ENCODE measurements at regions of chr9 and their contacts with region 1.

Region 1: GRCh38 chr9:134135343-134136118 is at the start of gene WDR5:
- DNase-seq: peak; percentile 95
- ATAC-seq: peak; percentile 73
- H3K4me3 Mint-ChIP-seq: peak within 1 kb of the TSS; percentile 99
- H3K27ac Mint-ChIP-seq: peak within 1 kb of the TSS; percentile 89
- H3K4me1 Mint-ChIP-seq: peaks cover 29% of the 10 kb centered on the region
- H3K27me3 Mint-ChIP-seq: no peaks in the 10 kb centered on the region
- total RNA-seq, gene WDR5: 35.4 to 37.6 TPM

Region 2: DNA sequence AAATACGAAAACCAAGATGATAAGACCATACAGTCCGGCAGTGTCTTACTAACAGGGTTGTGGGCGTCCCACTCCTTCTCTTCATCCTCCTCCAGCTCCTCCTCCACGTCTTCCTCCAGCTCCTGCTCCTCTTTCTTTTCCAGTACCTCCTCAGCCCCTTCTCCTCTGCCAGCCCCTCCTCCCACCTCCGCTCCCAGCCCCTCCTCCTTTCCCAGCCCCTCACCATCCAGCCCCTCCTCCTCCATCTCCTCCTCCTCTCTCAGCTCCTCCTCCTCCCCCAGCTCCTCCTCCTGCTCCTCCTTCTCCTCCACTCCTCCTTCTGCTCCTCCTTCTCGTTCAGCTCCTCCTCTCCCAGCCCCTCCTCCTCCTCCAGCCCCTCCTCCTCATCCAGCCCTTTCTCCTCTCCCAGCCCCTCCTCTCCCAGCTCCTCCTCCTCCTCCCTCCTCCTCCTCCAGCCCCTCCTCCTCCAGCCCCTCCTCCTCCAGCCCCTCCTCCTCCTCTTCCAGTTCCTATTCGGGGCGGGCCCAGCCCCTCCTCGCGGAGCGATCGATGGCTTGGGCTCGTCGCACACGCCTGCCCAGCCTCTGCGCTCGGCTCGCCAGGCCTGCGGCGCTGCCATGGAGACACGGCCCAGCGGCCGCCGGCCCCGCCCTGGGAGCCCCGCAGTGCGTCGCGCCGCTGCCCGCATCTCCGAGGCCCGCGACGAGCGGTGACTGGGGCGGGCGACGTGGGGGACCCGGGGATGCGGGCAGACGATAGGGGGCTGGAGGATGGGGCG is 110.5 kb before region 1 on chr9 and contains the start of gene BRD3OS:
- POLR2A ChIA-PET with region 1: interaction called, 14 read pairs
- DNase-seq: peak; percentile 90
- ATAC-seq: peak; percentile 88
- H3K4me3 Mint-ChIP-seq: peak within 1 kb of the TSS; percentile 86
- H3K27ac Mint-ChIP-seq: peak within 1 kb of the TSS; percentile 48
- H3K4me1 Mint-ChIP-seq: peaks cover 3% of the 10 kb centered on the region
- H3K27me3 Mint-ChIP-seq: peaks cover 5% of the 10 kb centered on the region
- total RNA-seq, gene BRD3OS: 14.2 to 17.0 TPM

Region 3: GRCh38 chr9:134066913-134067851 is 68.3 kb before region 1 on chr9:
- POLR2A ChIA-PET with region 1: interaction called, 16 read pairs
- DNase-seq: peak; percentile 65
- ATAC-seq: peak; percentile 0
- H3K4me3 Mint-ChIP-seq: peak overlapping the region; percentile 95
- H3K27ac Mint-ChIP-seq: peak overlapping the region; percentile 97
- H3K4me1 Mint-ChIP-seq: peaks cover 19% of the 10 kb centered on the region
- H3K27me3 Mint-ChIP-seq: peaks cover 21% of the 10 kb centered on the region

Region 4: GRCh38 chr9:134099123-134099787 is 36.3 kb before region 1 on chr9:
- POLR2A ChIA-PET with region 1: no interaction called
- DNase-seq: peak; percentile 44
- ATAC-seq: peak; percentile 88
- H3K4me3 Mint-ChIP-seq: no peak overlapping the region
- H3K27ac Mint-ChIP-seq: no peak overlapping the region
- H3K4me1 Mint-ChIP-seq: peaks cover 3% of the 10 kb centered on the region
- H3K27me3 Mint-ChIP-seq: peaks cover 6% of the 10 kb centered on the region

Region 5: DNA sequence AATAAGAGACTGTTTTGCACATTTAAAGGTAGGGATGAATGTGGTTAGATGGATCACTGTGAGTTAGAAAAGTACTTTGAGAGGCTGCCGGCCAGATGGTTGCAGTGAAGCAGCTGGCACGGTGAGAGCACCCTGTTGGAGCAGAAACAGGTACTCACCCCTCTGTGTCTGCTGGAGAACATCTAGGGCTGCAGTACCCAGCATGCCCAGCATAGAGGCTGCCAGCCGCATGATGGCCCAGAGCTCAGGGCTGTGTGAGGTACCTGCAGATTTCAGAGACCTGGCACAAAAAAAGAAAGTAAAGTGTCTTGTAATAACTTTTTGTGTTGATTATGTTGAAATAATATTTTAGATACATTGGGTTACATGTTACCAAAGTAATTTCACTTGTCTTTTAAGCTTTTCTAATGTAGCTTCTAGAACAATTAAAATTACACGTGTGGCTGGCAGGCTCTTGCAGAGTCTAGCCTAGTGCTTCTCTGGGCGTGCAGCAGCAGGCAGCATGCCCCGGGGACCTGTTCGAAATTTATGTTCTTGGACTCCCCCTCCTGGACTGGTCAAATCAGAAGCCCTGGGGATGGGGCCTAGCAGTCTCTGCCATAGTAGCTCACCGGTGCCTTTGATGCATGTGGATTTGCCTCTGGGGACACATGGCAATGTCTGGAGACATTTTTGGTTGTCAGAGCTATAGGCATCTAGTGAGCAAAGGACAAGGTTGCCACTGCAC is 11.4 kb after region 1 on chr9:
- POLR2A ChIA-PET with region 1: interaction called, 11 read pairs
- DNase-seq: no peak
- ATAC-seq: no peak
- H3K4me3 Mint-ChIP-seq: no peak overlapping the region
- H3K27ac Mint-ChIP-seq: no peak overlapping the region
- H3K4me1 Mint-ChIP-seq: peaks cover 12% of the 10 kb centered on the region
- H3K27me3 Mint-ChIP-seq: no peaks in the 10 kb centered on the region

Region 6: GRCh38 chr9:134163353-134164196 is 28.0 kb after region 1 on chr9:
- POLR2A ChIA-PET with region 1: interaction called, 44 read pairs
- DNase-seq: peak; percentile 77
- ATAC-seq: peak; percentile 9
- H3K4me3 Mint-ChIP-seq: no peak overlapping the region
- H3K27ac Mint-ChIP-seq: no peak overlapping the region
- H3K4me1 Mint-ChIP-seq: peaks cover 5% of the 10 kb centered on the region
- H3K27me3 Mint-ChIP-seq: no peaks in the 10 kb centered on the region

Measured in activated naive CD8-positive, alpha-beta T cell treated with anti-CD3 and anti-CD28 coated beads, Interleukin-2, amount 10 ng/mL, durations not matched to agents 7 days and 5 days (primary cell).